HepG2 (cell line): ENCODE measurements at regions of chr4 and their contacts with region 1.

Region 1: GRCh38 chr4:44760142-44760898 is 34.0 kb upstream of the GNPDA2 start:
- DNase-seq: peak; percentile 7
- ATAC-seq: peak; percentile 67
- H3K4me3 ChIP-seq: no peak overlapping the region
- H3K27ac ChIP-seq: no peak overlapping the region
- H3K4me1 ChIP-seq: no peaks in the 10 kb centered on the region
- H3K27me3 ChIP-seq: no peaks in the 10 kb centered on the region; a peak in 1 of 5 replicates
- CTCF ChIP-seq: peak; percentile 46; the same call in 1 of the 2 replicates
- EP300 ChIP-seq: no peak
- POLR2A ChIP-seq: no peak
- RAD21 ChIP-seq: no peak

Region 2: GRCh38 chr4:44544158-44544557 is 216.2 kb before region 1 on chr4:
- CTCF ChIA-PET with region 1: no interaction called
- POLR2A ChIA-PET with region 1: no interaction called
- in situ Hi-C with region 1: no loop called
- intact Hi-C with region 1: no loop called
- DNase-seq: no peak
- ATAC-seq: no peak
- H3K4me3 ChIP-seq: no peak overlapping the region
- H3K27ac ChIP-seq: no peak overlapping the region
- H3K4me1 ChIP-seq: no peaks in the 10 kb centered on the region
- H3K27me3 ChIP-seq: no peaks in the 10 kb centered on the region
- CTCF ChIP-seq: no peak
- EP300 ChIP-seq: no peak
- POLR2A ChIP-seq: no peak
- RAD21 ChIP-seq: no peak

Region 3: GRCh38 chr4:45442466-45442865 is 682.1 kb after region 1 on chr4:
- CTCF ChIA-PET with region 1: no interaction called
- POLR2A ChIA-PET with region 1: no interaction called
- in situ Hi-C with region 1: no loop called
- intact Hi-C with region 1: no loop called
- DNase-seq: no peak
- ATAC-seq: peak; percentile 63
- H3K4me3 ChIP-seq: no peak overlapping the region
- H3K27ac ChIP-seq: no peak overlapping the region
- H3K4me1 ChIP-seq: no peaks in the 10 kb centered on the region
- H3K27me3 ChIP-seq: no peaks in the 10 kb centered on the region
- CTCF ChIP-seq: peak; percentile 14; the same call in 1 of the 2 replicates
- EP300 ChIP-seq: no peak
- POLR2A ChIP-seq: no peak
- RAD21 ChIP-seq: no peak

Region 4: DNA sequence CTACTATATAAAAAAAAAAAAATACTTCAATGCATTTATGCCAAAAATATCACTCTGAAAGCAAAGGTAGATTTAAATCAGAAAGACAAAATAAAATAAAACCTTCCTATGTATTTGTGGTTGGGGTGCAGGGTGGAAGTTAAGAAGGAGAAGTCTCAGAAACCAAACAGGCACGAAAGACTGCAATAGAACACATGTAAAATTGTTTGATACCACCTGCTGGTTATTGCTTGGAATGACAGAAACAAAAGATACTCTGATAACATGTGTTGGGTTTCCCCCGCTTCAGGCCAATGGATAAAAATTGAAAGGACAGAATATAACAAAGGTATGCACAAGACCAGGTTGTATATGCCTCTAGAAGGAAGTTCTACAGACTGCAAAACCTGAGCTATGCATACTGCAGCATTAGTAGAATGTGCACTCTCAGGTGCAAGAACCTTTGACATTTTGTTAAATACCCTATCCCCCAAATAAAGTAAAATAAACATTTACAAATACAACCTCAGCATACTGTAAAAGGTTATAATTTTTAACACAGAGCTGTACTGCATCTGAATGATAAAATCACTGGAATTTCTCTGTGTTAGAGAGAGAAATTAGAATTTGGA is 1510.8 kb after region 1 on chr4:
- CTCF ChIA-PET with region 1: interaction called, 3 read pairs
- POLR2A ChIA-PET with region 1: no interaction called
- in situ Hi-C with region 1: loop called (anchors 25 kb)
- intact Hi-C with region 1: no loop called
- DNase-seq: peak; percentile 17
- ATAC-seq: peak; percentile 79
- H3K4me3 ChIP-seq: no peak overlapping the region
- H3K27ac ChIP-seq: no peak overlapping the region
- H3K4me1 ChIP-seq: no peaks in the 10 kb centered on the region
- H3K27me3 ChIP-seq: no peaks in the 10 kb centered on the region
- CTCF ChIP-seq: peak; percentile 60
- EP300 ChIP-seq: no peak
- POLR2A ChIP-seq: no peak
- RAD21 ChIP-seq: no peak

Region 5: GRCh38 chr4:46648088-46648744 is 1887.9 kb after region 1 on chr4:
- CTCF ChIA-PET with region 1: no interaction called
- POLR2A ChIA-PET with region 1: no interaction called
- in situ Hi-C with region 1: no loop called
- intact Hi-C with region 1: loop called (anchors 5 kb)
- DNase-seq: peak; percentile 37
- ATAC-seq: peak; percentile 78
- H3K4me3 ChIP-seq: no peak overlapping the region
- H3K27ac ChIP-seq: no peak overlapping the region
- H3K4me1 ChIP-seq: no peaks in the 10 kb centered on the region
- H3K27me3 ChIP-seq: no peaks in the 10 kb centered on the region; a peak in 1 of 5 replicates
- CTCF ChIP-seq: peak; percentile 54
- EP300 ChIP-seq: no peak
- POLR2A ChIP-seq: no peak
- RAD21 ChIP-seq: no peak